Activated naive CD8-positive, alpha-beta T cell treated with anti-CD3 and anti-CD28 coated beads, Interleukin-2, amount 10 ng/mL, durations not matched to agents 7 days and 5 days (primary cell): ENCODE measurements at regions of chr19 and their contacts with region 1.

Region 1: GRCh38 chr19:39435499-39436349 is at the start of gene RPS16:
- DNase-seq: peak; percentile 100
- ATAC-seq: peak; percentile 87
- H3K4me3 Mint-ChIP-seq: peak within 1 kb of the TSS; percentile 100
- H3K27ac Mint-ChIP-seq: peak within 1 kb of the TSS; percentile 99
- H3K4me1 Mint-ChIP-seq: peaks cover 42% of the 10 kb centered on the region
- H3K27me3 Mint-ChIP-seq: peaks cover 3% of the 10 kb centered on the region
- total RNA-seq, gene RPS16: 2,294 to 2,369 TPM

Region 2: GRCh38 chr19:39372047-39372802 is 63.5 kb before region 1 on chr19:
- POLR2A ChIA-PET with region 1: no interaction called
- DNase-seq: no peak
- ATAC-seq: no peak
- H3K4me3 Mint-ChIP-seq: no peak overlapping the region
- H3K27ac Mint-ChIP-seq: no peak overlapping the region
- H3K4me1 Mint-ChIP-seq: peaks cover 2% of the 10 kb centered on the region
- H3K27me3 Mint-ChIP-seq: no peaks in the 10 kb centered on the region

Region 3: GRCh38 chr19:39390755-39391592 is 44.8 kb before region 1 on chr19 and contains the starts of genes MED29 and PAF1:
- POLR2A ChIA-PET with region 1: interaction called, 39 read pairs
- DNase-seq: peak; percentile 89
- ATAC-seq: peak; percentile 96
- H3K4me3 Mint-ChIP-seq: peak within 1 kb of the TSS; percentile 96
- H3K27ac Mint-ChIP-seq: peak within 1 kb of the TSS; percentile 99
- H3K4me1 Mint-ChIP-seq: peaks cover 25% of the 10 kb centered on the region
- H3K27me3 Mint-ChIP-seq: no peaks in the 10 kb centered on the region
- total RNA-seq, gene MED29: 39.0 to 40.7 TPM
- total RNA-seq, gene PAF1: 40.7 to 47.0 TPM

Region 4: DNA sequence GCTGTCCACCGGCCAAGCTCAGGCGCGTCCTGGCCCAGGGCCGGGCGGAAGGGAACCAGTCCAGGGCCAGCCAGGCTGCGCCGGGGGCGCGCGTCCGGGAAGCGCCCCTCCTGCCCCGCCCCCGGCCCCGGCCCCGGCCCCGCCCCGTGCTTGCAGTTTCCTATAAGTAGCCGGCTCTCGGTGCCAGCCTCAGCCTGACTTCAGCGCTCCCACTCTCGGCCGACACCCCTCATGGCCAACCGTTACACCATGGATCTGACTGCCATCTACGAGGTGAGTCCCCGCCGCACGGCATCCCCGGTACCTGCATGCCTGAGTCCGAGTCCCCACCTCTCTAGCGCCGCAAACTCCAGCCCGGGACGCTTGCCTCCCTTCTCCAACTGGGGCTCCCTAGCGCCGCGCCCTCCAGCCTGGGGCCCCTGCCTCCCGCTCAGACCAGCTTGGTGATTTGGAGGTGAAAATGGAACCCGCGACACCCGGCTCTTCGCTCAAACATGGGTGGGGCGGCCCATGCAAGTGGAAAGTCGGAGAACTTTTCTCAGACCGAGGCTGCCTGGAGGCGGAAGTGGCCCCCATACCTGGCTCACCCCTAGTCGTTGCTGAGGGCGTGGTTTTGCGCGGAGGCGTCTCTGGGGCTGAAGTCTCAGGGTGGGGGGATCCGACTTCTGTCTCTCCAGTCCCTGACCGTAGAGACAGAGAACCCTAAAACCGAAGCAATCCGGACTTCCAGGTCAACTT is 28.9 kb before region 1 on chr19 and contains the start of gene ZFP36:
- POLR2A ChIA-PET with region 1: interaction called, 40 read pairs
- DNase-seq: peak; percentile 88
- ATAC-seq: peak; percentile 34
- H3K4me3 Mint-ChIP-seq: peak within 1 kb of the TSS; percentile 86
- H3K27ac Mint-ChIP-seq: peak within 1 kb of the TSS; percentile 99
- H3K4me1 Mint-ChIP-seq: peaks cover 45% of the 10 kb centered on the region
- H3K27me3 Mint-ChIP-seq: no peaks in the 10 kb centered on the region
- total RNA-seq, gene ZFP36: 102 to 107 TPM

Region 5: GRCh38 chr19:39423258-39424086 is 12.3 kb before region 1 on chr19:
- POLR2A ChIA-PET with region 1: interaction called, 26 read pairs
- DNase-seq: no peak
- ATAC-seq: no peak
- H3K4me3 Mint-ChIP-seq: no peak overlapping the region
- H3K27ac Mint-ChIP-seq: no peak overlapping the region
- H3K4me1 Mint-ChIP-seq: no peaks in the 10 kb centered on the region
- H3K27me3 Mint-ChIP-seq: no peaks in the 10 kb centered on the region

Region 6: GRCh38 chr19:39532233-39533002 is 96.7 kb after region 1 on chr19 and contains the start of gene EID2B:
- POLR2A ChIA-PET with region 1: interaction called, 16 read pairs
- DNase-seq: peak; percentile 96
- ATAC-seq: peak; percentile 94
- H3K4me3 Mint-ChIP-seq: peak within 1 kb of the TSS; percentile 92
- H3K27ac Mint-ChIP-seq: peak within 1 kb of the TSS; percentile 82
- H3K4me1 Mint-ChIP-seq: peaks cover 12% of the 10 kb centered on the region
- H3K27me3 Mint-ChIP-seq: no peaks in the 10 kb centered on the region
- total RNA-seq, gene EID2B: 6.3 to 7.0 TPM